Upper lobe of right lung (tissue), 1 donor: ENCODE measurements at regions of chr5 and their contacts with region 1.

Region 1: DNA sequence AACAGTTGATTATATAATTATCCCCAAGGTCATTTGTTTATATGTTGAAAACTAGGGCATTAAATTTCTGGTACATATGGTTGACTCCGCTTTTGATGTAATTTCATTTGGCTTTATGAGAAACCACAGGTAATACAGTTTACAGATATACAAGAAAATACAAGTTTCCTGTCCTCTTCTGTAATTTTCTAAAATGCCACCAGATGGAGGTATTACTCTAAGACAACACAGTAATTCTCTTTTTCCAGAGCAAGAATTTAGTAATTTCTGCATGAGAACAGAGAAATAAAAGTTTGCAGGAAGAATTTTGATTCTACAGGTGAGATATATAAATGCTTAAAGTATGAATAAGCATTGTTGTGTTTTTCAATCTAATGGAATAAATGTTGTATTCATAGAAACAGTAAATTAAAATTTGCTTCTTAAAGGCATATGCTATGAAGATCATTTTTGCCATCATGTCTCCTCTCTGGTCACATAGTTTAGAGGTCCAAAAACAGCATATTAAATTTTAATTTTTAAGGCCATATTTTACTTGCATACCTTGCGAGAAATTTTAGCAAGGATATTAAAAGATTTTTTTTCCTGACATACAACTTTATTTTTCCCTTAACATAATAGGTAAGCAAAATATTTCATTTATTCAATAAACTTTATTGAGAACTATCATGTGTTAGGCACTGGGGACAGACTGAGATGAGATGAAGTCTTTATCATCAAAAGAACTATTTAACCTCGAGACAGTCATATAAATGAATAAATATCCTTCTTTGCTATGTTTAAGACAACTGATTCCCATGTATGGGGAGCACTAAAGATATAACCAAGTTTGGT is 22.7 kb downstream of the CHD1 start:
- DNase-seq: no peak
- ATAC-seq: peak; percentile 51
- H3K4me3 ChIP-seq: no peak overlapping the region
- H3K27ac ChIP-seq: no peak overlapping the region
- H3K4me1 ChIP-seq: peaks cover under 1% of the 10 kb centered on the region
- H3K27me3 ChIP-seq: no peaks in the 10 kb centered on the region
- CTCF ChIP-seq: peak; percentile 82

Region 2: DNA sequence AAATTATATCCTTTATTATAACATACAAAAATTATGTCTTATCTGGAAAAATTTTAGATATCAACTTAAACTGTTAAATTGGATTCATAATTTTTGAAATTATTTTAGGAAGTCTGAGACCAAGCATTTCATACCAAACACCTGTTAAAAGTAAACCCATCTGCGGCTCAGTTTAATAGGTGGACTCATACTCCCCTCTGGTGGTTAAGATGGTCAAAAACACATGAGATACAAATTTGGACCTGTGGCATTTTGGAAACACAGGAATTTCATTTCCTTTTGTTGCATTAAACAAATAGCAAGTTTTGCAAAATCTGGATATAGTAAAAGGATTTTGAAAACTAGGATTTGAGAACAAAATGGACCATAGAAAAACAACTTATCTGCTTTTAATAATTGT is 78.9 kb before region 1 on chr5:
- intact Hi-C with region 1: no loop called
- DNase-seq: no peak
- ATAC-seq: peak; percentile 76
- H3K4me3 ChIP-seq: no peak overlapping the region
- H3K27ac ChIP-seq: no peak overlapping the region
- H3K4me1 ChIP-seq: no peaks in the 10 kb centered on the region
- H3K27me3 ChIP-seq: no peaks in the 10 kb centered on the region
- CTCF ChIP-seq: peak; percentile 59

Region 3: DNA sequence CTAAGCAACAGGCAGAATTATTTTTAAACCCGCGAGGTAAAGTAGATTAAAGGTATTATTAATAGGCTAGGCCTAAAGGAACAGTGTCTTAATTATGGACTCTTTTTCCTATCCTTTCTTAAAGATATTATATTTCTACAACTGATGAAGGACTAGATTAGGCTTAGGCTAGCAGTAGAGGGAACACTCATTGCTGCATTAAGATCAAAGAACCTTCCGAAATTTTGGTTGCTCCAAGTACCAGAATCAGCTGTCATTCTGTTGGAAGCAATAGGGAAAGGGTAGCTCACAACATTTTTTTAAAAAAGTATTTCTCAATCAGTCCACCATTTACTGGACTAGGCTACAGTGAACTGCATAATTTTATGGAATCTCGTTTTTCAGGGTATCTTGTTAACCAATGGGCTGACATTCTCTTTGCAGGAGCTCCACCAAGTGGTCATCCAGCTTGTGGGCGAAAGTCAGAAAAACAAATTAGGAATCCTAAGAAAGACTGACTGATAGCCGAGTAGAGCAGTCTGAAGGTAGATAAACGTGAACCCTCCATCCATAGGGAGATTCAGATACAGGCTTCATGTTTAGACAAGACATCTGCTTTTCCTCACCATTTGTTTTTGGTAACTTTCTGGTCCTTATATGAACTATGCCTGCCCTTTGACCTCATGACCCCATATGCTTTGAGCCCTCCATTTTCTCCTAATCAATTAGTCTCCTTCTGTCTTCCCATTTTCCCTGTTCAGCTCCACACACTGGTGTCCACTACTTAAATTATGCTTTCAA is 126.3 kb after region 1 on chr5:
- intact Hi-C with region 1: loop called (anchors 5 kb)
- DNase-seq: no peak
- ATAC-seq: peak; percentile 92
- H3K4me3 ChIP-seq: peak overlapping the region; percentile 46
- H3K27ac ChIP-seq: peak overlapping the region; percentile 70
- H3K4me1 ChIP-seq: peaks cover 17% of the 10 kb centered on the region
- H3K27me3 ChIP-seq: no peaks in the 10 kb centered on the region
- CTCF ChIP-seq: peak; percentile 79